A549 (cell line): ENCODE measurements at regions of chr19 and their contacts with region 1.

Region 1: DNA sequence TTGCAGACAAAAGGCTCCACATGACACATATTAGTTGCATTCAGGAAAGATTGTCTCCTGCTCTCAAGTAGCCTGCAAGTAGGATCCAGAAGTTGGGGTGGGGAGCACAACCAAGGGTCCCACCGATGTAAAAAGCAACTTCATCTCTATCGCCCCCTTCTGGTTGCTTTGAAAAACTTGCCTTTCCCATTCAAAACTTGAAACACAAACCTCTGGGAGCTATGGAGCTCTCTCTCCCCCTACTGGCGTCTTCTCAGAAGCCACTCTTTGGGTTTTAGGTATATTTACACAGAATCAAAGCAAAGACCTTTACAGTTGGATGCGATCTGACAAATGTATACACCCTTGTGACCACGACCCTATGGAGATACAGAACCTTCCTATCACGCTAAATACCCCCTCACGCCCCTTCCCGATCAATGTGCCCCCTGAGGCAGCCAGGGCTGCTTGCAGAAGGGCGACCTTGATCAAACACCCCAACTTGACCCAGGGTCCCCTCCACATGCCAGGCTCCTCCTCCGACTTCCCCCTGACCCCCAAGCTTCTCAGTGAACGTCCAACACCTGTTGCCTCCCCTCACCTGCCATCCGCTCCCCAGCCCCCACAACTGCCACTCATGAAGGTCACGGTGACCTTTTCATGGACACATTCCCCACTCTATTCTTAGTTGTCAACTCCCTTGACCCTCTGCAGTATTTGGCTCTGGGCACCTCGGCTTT is 10.1 kb downstream of the NOSIP start:
- DNase-seq: peak; percentile 92
- ATAC-seq: peak; percentile 94 to 95
- H3K4me3 ChIP-seq: no peak overlapping the region
- H3K27ac ChIP-seq: no peak overlapping the region
- H3K4me1 ChIP-seq: peaks cover 13% of the 10 kb centered on the region
- CTCF ChIP-seq: peak; percentile 100
- EP300 ChIP-seq: no peak
- POLR2A ChIP-seq: no peak
- RAD21 ChIP-seq: peak; percentile 88 to 94

Region 2: GRCh38 chr19:49417090-49417489 is 153.2 kb before region 1 on chr19:
- CTCF ChIA-PET with region 1: no interaction called
- POLR2A ChIA-PET with region 1: no interaction called
- DNase-seq: no peak
- ATAC-seq: no peak
- H3K4me3 ChIP-seq: no peak overlapping the region
- H3K27ac ChIP-seq: no peak overlapping the region
- H3K4me1 ChIP-seq: 0 out of 3 replicates have a peak, but pooled peaks cover 2% of the 10 kb centered on the region
- CTCF ChIP-seq: no peak
- EP300 ChIP-seq: no peak
- POLR2A ChIP-seq: no peak
- RAD21 ChIP-seq: no peak

Region 3: GRCh38 chr19:49502866-49503581 is 67.3 kb before region 1 on chr19:
- CTCF ChIA-PET with region 1: interaction called, 201 read pairs
- POLR2A ChIA-PET with region 1: no interaction called
- DNase-seq: peak; percentile 69 to 79
- ATAC-seq: peak; percentile 61 to 71
- H3K4me3 ChIP-seq: no peak overlapping the region
- H3K27ac ChIP-seq: no peak overlapping the region
- H3K4me1 ChIP-seq: peaks cover 24% of the 10 kb centered on the region
- CTCF ChIP-seq: peak; percentile 88
- EP300 ChIP-seq: no peak
- POLR2A ChIP-seq: no peak
- RAD21 ChIP-seq: peak; percentile 86 to 88

Region 4: DNA sequence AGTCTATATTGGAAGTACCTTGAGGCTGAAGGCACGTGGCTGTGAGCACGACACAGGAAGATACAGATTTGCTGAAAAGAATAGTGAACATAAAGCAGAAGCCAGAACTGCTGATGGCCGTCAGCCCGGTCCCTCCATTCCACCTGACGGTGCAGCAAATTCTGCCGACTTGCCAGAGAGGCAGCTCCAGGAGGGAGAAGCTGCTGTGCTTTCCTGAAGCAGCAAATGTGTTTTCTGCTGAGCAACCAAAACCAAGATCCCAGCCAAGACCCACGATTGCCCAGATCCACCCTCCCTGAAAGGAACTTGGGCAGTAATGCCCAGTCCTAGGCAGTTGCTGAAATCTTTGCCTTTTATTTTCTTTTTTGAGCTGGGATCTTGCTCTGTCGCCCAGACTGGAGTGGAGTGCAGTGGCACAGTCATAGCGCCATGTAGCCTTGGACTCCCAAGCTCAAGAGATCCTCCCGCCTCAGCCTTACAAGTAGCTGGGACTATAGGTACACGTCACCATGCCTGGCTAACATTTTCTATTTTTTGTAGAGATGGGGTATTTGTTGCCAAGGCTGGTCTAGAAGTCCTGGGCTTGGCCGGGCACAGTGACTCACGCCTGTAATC is 49.5 kb before region 1 on chr19:
- CTCF ChIA-PET with region 1: interaction called, 14 read pairs
- POLR2A ChIA-PET with region 1: no interaction called
- DNase-seq: no peak
- ATAC-seq: peak in 1 of 2 experiments; percentile 25; a peak in 3 of 6 replicates
- H3K4me3 ChIP-seq: no peak overlapping the region
- H3K27ac ChIP-seq: no peak overlapping the region
- H3K4me1 ChIP-seq: no peaks in the 10 kb centered on the region
- CTCF ChIP-seq: no peak
- EP300 ChIP-seq: no peak
- POLR2A ChIP-seq: no peak
- RAD21 ChIP-seq: no peak

Region 5: DNA sequence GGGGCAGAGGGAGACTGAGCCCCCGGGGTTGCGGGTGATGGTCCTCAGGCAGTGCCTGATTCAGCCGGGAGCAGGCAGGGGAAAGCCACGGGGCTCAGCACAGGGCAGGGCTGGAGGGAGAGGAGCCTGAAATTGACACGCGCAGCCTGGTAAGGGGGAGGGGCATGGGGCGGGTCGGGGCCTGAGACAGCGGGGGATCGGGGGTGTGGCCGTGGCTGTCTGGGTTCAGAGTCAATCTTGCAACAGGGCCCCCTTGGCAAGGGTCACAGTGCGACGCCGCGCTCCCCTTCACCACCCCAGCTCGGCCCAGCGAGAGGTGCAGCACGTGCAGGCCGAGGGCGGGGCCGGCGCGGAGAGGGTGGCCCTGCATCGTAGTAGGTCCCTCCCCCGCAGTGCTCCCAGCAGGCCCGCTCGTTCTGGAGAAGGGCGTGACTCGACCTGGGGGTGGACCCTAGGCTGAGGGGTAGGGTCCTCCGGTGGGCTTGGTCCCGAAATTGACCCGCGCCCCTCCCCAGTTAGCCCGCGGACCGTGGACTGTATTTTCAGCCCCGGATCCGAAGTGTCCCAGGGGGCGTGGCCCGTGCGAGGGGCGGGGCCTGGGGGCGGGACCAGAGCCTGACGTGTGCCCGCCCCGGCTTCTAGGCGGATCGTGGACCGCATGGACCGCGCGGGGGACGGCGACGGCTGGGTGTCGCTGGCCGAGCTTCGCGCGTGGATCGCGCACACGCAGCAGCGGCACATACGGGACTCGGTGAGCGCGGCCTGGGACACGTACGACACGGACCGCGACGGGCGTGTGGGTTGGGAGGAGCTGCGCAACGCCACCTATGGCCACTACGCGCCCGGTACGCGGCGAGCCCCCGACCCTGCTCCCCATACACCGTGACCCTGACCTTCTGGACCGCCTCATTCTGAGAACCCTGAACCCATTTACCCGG is 36.5 kb before region 1 on chr19:
- CTCF ChIA-PET with region 1: interaction called, 25 read pairs
- POLR2A ChIA-PET with region 1: no interaction called
- DNase-seq: peak; percentile 79 to 85
- ATAC-seq: peak; percentile 91 to 92
- H3K4me3 ChIP-seq: peak overlapping the region; percentile 58
- H3K27ac ChIP-seq: peak overlapping the region; percentile 9 to 73; a peak in 3 of 6 replicates
- H3K4me1 ChIP-seq: peaks cover 7% of the 10 kb centered on the region; the same call in 1 of the 3 replicates
- CTCF ChIP-seq: peak; percentile 49
- EP300 ChIP-seq: no peak
- POLR2A ChIP-seq: no peak; the same call in 1 of the 2 replicates
- RAD21 ChIP-seq: no peak

Region 6: GRCh38 chr19:49580264-49581006 is 10.1 kb after region 1 on chr19 and contains the start of gene NOSIP:
- CTCF ChIA-PET with region 1: interaction called, 79 read pairs
- POLR2A ChIA-PET with region 1: interaction called, 22 read pairs
- DNase-seq: peak; percentile 94 to 99
- ATAC-seq: peak; percentile 98 to 99
- H3K4me3 ChIP-seq: peak within 1 kb of the TSS; percentile 63
- H3K27ac ChIP-seq: peak within 1 kb of the TSS; percentile 68 to 88
- H3K4me1 ChIP-seq: peaks cover 8% of the 10 kb centered on the region; the same call in 2 of the 3 replicates
- CTCF ChIP-seq: no peak
- EP300 ChIP-seq: no peak
- POLR2A ChIP-seq: peak; percentile 99
- RAD21 ChIP-seq: 0 out of 5 replicates have a peak, but pooled peaks of 1 of the 2 experiments have one; percentile 4
- polyA plus RNA-seq, gene NOSIP: 49.0 and 52.5 TPM in 2 replicates

Region 7: GRCh38 chr19:49595819-49596404 is 25.6 kb after region 1 on chr19:
- CTCF ChIA-PET with region 1: interaction called, 10 read pairs
- POLR2A ChIA-PET with region 1: interaction called, 5 read pairs
- DNase-seq: no peak
- ATAC-seq: no peak
- H3K4me3 ChIP-seq: no peak overlapping the region
- H3K27ac ChIP-seq: no peak overlapping the region
- H3K4me1 ChIP-seq: peaks cover 7% of the 10 kb centered on the region
- CTCF ChIP-seq: no peak
- EP300 ChIP-seq: no peak
- POLR2A ChIP-seq: no peak
- RAD21 ChIP-seq: no peak

Region 8: GRCh38 chr19:49676690-49677231 is 106.5 kb after region 1 on chr19:
- CTCF ChIA-PET with region 1: interaction called, 11 read pairs
- POLR2A ChIA-PET with region 1: no interaction called
- DNase-seq: peak; percentile 100
- ATAC-seq: peak; percentile 58 to 81
- H3K4me3 ChIP-seq: peak overlapping the region; percentile 82
- H3K27ac ChIP-seq: peak overlapping the region; percentile 97 to 99
- H3K4me1 ChIP-seq: peaks cover 38% of the 10 kb centered on the region
- CTCF ChIP-seq: no peak
- EP300 ChIP-seq: no peak
- POLR2A ChIP-seq: no peak
- RAD21 ChIP-seq: no peak